IMR-90 (cell line): ENCODE measurements at regions of chr12 and their contacts with region 1.

Region 1: DNA sequence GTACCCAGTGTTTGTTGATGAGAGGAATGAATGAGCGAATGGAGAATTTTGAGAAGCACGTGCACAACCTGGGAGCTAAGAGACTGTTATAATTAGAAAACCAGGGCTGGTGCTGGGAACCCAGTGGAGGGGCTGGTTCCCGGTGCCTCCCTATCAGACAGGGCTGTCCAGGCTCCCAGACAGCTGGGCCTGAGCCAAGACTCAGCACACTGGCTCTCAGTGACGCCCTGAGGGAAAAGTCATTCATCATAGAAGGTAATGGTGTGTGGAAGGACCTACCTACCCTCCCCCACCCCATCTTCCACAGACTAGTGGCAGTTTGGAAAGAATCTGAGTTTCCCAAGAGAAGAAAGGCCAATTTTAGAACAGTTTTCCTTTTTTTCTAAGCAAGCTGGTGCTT is 34.7 kb downstream of the KCNA5 start:
- DNase-seq: no peak
- ATAC-seq: no peak
- H3K4me3 ChIP-seq: no peak overlapping the region
- H3K27ac ChIP-seq: no peak overlapping the region
- H3K4me1 ChIP-seq: no peaks in the 10 kb centered on the region
- H3K27me3 ChIP-seq: peaks cover 3% of the 10 kb centered on the region; the same call in 1 of the 2 replicates
- CTCF ChIP-seq: no peak
- POLR2A ChIP-seq: no peak
- RAD21 ChIP-seq: no peak

Region 2: GRCh38 chr12:4552191-4552590 is 526.2 kb before region 1 on chr12:
- CTCF ChIA-PET with region 1: no interaction called
- POLR2A ChIA-PET with region 1: interaction called, 10 read pairs
- dilution Hi-C with region 1: no loop called
- in situ Hi-C with region 1: no loop called
- intact Hi-C with region 1: no loop called
- DNase-seq: no peak
- ATAC-seq: no peak
- H3K4me3 ChIP-seq: no peak overlapping the region
- H3K27ac ChIP-seq: no peak overlapping the region
- H3K4me1 ChIP-seq: no peaks in the 10 kb centered on the region
- H3K27me3 ChIP-seq: no peaks in the 10 kb centered on the region
- CTCF ChIP-seq: no peak
- POLR2A ChIP-seq: no peak
- RAD21 ChIP-seq: no peak

Region 3: DNA sequence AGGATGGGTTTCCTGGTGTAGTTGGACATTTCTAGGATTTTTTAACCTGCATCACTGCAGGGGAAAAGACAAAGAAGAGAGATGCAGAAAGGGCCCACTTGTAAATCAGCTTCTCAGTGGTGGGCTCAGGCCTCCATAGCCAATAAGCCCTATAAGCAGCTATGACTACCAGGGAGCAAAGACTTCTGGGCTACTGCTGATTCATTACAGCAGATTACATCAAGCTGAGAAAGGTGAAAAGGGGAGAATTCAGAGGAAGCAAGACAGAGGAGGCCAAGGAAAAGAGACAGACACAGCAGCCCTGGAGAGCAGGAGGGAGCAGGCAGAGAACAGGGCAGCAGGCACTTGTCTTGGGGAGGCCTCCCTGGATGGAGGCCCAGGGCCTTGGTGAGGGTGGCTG is 60.4 kb after region 1 on chr12:
- CTCF ChIA-PET with region 1: no interaction called
- POLR2A ChIA-PET with region 1: no interaction called
- dilution Hi-C with region 1: no loop called
- in situ Hi-C with region 1: no loop called
- intact Hi-C with region 1: no loop called
- DNase-seq: peak; percentile 74
- ATAC-seq: peak; percentile 53
- H3K4me3 ChIP-seq: no peak overlapping the region
- H3K27ac ChIP-seq: no peak overlapping the region
- H3K4me1 ChIP-seq: peaks cover 15% of the 10 kb centered on the region
- H3K27me3 ChIP-seq: no peaks in the 10 kb centered on the region
- CTCF ChIP-seq: no peak
- POLR2A ChIP-seq: no peak
- RAD21 ChIP-seq: no peak